ENCODE measurements at regions of chr15 and their contacts with region 1.

Region 1: DNA sequence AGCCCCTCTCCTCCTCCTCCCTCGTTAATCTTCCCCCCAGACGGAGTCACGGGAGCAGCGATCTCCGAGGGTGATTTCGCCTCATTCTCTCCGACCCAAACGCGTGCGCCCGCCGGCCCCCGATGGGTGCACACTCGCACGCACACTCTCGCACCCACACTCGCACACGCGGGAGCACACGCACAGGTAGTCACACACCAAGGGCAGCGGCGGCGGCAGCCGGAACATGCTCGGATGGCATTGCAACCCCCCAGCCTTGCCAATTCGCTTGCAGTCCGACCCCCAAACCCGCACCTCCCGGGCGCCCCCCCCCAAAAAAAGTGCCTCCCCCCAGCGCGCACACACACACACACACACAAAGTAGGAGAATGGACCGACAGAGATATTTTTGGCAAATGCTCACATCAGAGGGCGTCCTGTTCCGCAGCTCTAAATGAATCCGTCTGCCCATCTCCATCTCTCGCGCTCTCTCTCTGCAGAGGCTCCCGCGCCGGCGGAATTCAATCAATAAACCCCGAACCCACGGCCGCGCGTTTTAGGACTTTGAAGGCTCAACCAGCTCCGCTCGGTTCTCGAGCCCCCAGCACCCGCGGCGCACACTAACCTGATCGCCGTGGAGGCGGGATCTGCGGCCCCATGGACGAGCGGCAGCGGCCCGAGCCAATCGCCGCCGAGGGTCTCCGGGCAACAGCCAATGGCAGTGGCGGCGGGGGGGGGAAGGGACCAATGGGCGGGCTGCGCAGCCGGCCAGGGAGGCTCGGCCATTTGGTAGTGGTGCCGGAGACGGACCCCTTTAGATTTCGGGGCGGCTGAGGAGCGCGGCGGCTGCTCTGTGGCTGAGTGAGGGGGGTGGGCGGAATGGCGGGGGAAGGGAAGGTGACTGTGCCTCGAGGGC is at the start of gene ANP32A:
- DNase-seq: peak; percentile 96
- H3K4me3 ChIP-seq: peak within 1 kb of the TSS; percentile 78 to 95 (median 85)
- H3K27ac ChIP-seq: peak within 1 kb of the TSS; percentile 72
- H3K4me1 ChIP-seq: peaks cover 19% of the 10 kb centered on the region
- H3K27me3 ChIP-seq: no peaks in the 10 kb centered on the region
- CTCF ChIP-seq: no peak
- total RNA-seq, gene ANP32A: 42.5 to 109 TPM

Region 2: GRCh38 chr15:68492855-68493254 is 327.7 kb before region 1 on chr15:
- CTCF ChIA-PET with region 1: no interaction called
- dilution Hi-C with region 1: no loop called
- in situ Hi-C with region 1: no loop called
- intact Hi-C with region 1: no loop called
- DNase-seq: peak; percentile 12
- H3K4me3 ChIP-seq: no peak overlapping the region
- H3K27ac ChIP-seq: no peak overlapping the region
- H3K4me1 ChIP-seq: no peaks in the 10 kb centered on the region
- H3K27me3 ChIP-seq: peaks cover 2% of the 10 kb centered on the region
- CTCF ChIP-seq: no peak

Region 3: DNA sequence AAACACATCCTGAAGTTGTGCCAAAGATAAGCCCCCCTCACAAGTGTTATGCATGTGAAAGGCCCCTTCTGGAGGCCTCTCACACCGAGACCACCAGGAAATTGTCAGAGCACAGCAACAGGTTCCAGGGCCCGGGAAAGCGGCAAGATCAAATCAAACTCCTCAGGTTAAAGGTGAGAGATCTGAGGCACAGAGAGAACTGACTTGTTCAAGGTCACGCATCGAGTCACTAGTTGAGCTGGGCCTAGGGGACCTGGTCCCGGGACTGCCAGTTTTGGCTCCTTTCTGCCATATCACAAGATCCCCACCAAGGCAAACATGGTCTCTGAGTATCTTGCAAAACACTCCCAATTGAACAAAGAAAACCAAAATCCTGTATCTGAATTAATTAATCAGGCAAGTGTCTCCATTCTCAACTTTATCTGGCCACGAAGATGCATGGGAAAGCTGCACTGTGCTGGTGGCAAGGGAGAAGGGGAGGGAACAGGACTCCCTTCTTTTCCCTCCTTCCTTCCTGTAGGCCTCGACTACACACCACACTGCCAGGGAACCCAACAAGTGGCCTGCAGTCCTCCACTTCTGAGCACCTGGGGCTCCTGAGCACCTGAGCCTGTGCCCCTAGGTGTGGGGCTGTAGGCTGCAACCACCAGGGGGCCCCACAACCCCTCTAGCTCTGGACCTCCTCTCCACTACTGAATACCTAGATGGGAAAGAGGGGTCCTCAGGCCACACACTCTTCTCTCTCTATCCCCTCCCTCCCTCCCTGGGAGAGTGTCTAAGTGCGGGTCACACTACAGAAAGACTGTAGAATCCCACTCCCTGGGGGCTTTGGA is 37.1 kb before region 1 on chr15:
- CTCF ChIA-PET with region 1: no interaction called
- dilution Hi-C with region 1: no loop called
- in situ Hi-C with region 1: no loop called
- intact Hi-C with region 1: loop called (anchors 1 kb)
- DNase-seq: peak; percentile 27
- H3K4me3 ChIP-seq: no peak overlapping the region
- H3K27ac ChIP-seq: no peak overlapping the region
- H3K4me1 ChIP-seq: peaks cover 19% of the 10 kb centered on the region
- H3K27me3 ChIP-seq: no peaks in the 10 kb centered on the region
- CTCF ChIP-seq: peak; percentile 56 to 81

Region 4: DNA sequence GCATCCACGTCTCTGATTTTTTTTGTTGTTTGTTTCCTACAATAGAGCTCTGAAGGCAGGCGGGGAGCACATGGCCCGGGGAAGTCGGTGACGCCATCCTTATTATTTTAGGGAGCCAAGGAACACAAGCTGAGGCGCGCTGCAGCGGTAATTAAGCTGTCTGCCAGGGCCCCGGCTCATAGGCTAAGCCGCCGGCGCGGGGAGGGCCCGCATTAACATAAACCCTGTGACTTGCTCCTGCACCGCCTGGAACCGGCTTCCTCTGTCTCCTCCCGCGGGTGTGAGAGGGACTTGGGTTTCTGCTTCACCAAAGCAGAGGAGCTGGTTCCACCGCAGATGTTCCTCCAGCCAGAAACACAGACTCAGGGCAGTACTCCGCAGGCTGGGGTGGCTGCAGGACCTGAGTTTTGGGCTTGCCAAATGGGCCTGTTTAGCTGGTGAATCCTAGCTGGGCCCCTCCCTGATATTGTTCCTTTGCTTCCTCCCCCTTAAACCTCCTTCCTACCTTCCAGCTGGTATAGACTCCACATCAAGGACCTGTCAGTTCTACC is 25.2 kb before region 1 on chr15:
- CTCF ChIA-PET with region 1: no interaction called
- dilution Hi-C with region 1: no loop called
- in situ Hi-C with region 1: no loop called
- intact Hi-C with region 1: loop called (anchors 1 kb)
- DNase-seq: peak; percentile 97
- H3K4me3 ChIP-seq: peak overlapping the region in 1 of 3 experiments; percentile 20
- H3K27ac ChIP-seq: peak overlapping the region; percentile 80
- H3K4me1 ChIP-seq: peaks cover 31% of the 10 kb centered on the region
- H3K27me3 ChIP-seq: no peaks in the 10 kb centered on the region
- CTCF ChIP-seq: no peak

Measured in mammary epithelial cell (primary cell).